Left cardiac atrium (tissue), 4 donors: ENCODE measurements at regions of chr4 and their contacts with region 1.

Region 1: DNA sequence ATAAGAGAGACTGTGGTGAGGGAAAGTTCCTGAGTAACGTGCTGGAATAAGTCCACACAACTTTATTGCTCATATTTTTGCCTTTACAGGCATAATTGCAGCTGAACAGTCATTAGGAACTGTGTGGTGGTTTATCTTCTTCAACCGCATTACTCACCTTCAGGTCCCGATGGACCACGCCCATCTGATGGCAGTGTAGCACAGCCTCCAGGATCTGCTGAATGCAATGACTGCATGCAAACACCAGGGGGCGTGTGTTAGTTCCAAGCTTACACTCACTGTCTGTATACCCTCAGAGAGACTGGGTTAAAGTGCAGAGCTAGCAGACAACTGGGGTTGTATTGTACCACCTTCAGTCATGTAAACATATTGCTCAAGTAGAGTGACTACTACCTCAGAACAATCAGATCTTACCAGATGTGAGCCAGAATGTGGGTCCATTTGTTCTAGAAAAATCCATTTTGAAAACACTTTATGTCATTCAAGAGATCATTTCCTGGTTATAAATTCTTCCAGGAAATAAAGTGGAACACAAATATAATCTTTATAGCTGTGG is 214.0 kb downstream of the CAMK2D start:
- DNase-seq: peak; percentile 90
- ATAC-seq: peak; percentile 97 to 98

Region 2: DNA sequence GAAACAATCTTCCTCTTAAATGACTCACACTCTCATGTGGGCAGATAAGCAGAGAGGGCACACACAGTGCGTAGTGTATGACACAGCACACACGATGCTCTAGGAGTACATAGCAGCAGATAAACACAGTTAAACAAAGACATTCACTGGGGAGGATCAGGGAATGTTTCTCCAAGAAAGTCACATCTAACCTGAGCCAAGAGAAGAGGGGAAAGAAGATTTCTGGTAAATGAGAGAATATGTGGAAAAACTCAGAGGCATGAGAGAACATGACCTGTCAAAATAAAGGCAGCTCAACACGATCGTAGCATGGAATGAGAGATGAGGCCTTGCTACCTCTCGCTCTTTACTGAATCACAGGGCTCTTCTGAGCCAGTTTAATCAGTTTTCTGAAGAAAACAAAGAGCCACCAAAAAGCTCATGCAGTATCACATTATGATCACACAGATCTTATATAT is 247.1 kb before region 1 on chr4:
- intact Hi-C with region 1: no loop called
- DNase-seq: peak; percentile 39
- ATAC-seq: peak; percentile 97 to 100

Region 3: GRCh38 chr4:113383111-113383785 is 164.3 kb before region 1 on chr4:
- intact Hi-C with region 1: loop called in 1 of 2 experiments (anchors 10 kb)
- DNase-seq: no peak
- ATAC-seq: peak; percentile 82 to 83

Region 4: GRCh38 chr4:113636438-113636818 is 88.9 kb after region 1 on chr4:
- intact Hi-C with region 1: loop called in 1 of 2 experiments (anchors 10 kb)
- DNase-seq: no peak
- ATAC-seq: peak in 1 of 2 donors; percentile 13

Region 5: GRCh38 chr4:113684534-113685091 is 137.0 kb after region 1 on chr4:
- intact Hi-C with region 1: loop called in 1 of 2 experiments (anchors 5 kb)
- DNase-seq: peak; percentile 65
- ATAC-seq: peak; percentile 95

Region 6: GRCh38 chr4:113761620-113762185 is 214.1 kb after region 1 on chr4 and contains the start of gene CAMK2D:
- intact Hi-C with region 1: loop called (anchors 2 to 10 kb)
- DNase-seq: peak; percentile 82
- ATAC-seq: peak; percentile 75 to 83
- total RNA-seq, gene CAMK2D: 133 to 136 TPM